ENCODE measurements at regions of chr13 and their contacts with region 1.

Region 1: DNA sequence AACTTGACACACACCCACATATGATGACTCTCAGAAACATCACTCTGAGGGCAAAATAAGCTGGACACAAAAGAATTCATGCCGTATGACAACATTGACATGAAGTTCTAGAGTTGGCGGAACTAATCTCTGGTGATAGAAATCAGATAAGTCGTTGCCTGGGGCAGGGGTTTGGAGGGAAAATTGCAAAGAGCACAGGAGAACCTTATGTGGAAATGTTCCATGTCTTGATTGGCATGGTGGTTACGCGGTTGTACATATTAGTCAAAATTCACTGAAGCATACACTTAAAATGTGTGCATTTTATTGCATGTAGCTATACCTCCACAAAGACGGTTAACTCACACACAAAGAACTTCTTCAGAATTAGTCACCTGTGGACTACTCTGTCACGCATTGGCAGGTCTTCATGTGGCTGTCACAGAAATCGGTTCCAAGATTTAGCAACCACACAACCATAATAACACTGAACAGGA is 137.8 kb upstream of the GJB6 start:
- DNase-seq: no peak
- ATAC-seq: no peak
- H3K4me3 ChIP-seq: no peak overlapping the region
- H3K27ac ChIP-seq: no peak overlapping the region
- H3K4me1 ChIP-seq: no peaks in the 10 kb centered on the region
- H3K27me3 ChIP-seq: no peaks in the 10 kb centered on the region
- CTCF ChIP-seq: no peak

Region 2: GRCh38 chr13:20231839-20232555 is 137.9 kb before region 1 on chr13 and contains the start of gene GJB6:
- CTCF ChIA-PET with region 1: no interaction called
- POLR2A ChIA-PET with region 1: interaction called, 10 read pairs
- in situ Hi-C with region 1: no loop called
- intact Hi-C with region 1: no loop called
- DNase-seq: no peak
- ATAC-seq: peak; percentile 75
- H3K4me3 ChIP-seq: peak within 1 kb of the TSS; percentile 33 to 41
- H3K27ac ChIP-seq: no peak within 1 kb of the TSS
- H3K4me1 ChIP-seq: no peaks in the 10 kb centered on the region
- H3K27me3 ChIP-seq: peaks cover 3% of the 10 kb centered on the region
- CTCF ChIP-seq: peak; percentile 41; the same call in 1 of the 2 replicates
- total RNA-seq, gene GJB6: 6.3 TPM

Region 3: DNA sequence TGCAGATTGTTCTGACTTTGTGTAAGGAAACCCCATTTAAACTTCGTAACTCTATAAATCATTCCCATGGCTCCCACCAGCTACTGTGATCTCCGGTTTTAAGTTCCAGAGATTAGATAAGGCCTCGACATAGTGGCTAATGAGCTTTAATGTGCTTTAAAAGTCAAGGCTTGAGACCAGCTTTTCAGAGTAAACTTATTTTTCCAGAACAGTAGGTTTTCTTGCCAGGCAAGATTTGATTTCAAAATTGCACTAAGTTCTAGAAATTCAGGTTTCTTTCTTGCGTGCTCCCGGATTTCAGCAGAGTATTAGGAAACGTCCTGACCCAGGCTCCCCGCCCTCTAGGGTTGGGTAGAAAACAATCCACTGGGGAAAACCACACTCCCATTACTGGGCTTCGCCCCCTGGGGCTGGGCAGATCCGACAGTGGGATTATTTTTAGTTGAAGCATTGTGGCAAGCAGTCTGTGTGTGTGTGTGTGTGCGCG is 112.4 kb after region 1 on chr13:
- CTCF ChIA-PET with region 1: no interaction called
- POLR2A ChIA-PET with region 1: no interaction called
- in situ Hi-C with region 1: no loop called
- intact Hi-C with region 1: no loop called
- DNase-seq: no peak
- ATAC-seq: no peak
- H3K4me3 ChIP-seq: no peak overlapping the region
- H3K27ac ChIP-seq: no peak overlapping the region
- H3K4me1 ChIP-seq: no peaks in the 10 kb centered on the region
- H3K27me3 ChIP-seq: no peaks in the 10 kb centered on the region
- CTCF ChIP-seq: no peak